PC-3 (cell line): ENCODE measurements at regions of chr9 and their contacts with region 1.

Region 1: GRCh38 chr9:108156270-108156998 is 666.9 kb upstream of the KLF4 start:
- DNase-seq: peak; percentile 76
- ATAC-seq: peak; percentile 93
- H3K4me3 ChIP-seq: peak overlapping the region; percentile 47
- H3K27ac ChIP-seq: peak overlapping the region; percentile 62
- H3K4me1 ChIP-seq: peaks cover 15% of the 10 kb centered on the region
- H3K27me3 ChIP-seq: no peaks in the 10 kb centered on the region
- CTCF ChIP-seq: no peak

Region 2: DNA sequence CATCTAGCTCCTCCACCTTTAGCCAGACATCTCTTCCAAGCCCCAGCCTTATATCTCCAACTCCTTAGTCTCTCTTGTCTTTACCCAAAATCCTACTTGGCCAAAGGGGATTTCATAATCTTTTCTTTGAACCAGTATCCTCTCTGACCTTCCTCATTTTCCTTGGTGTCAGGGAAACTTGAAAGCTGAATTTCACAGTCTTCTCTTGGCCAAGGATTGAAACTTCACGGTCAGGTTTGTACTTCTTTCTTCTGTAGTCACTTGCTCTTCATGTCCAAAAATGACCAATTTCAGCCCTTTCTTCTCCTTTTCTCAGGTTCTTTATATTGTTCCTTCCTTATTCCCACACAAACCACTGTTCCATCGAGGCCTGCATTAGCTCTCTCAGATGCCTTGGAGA is 193.2 kb before region 1 on chr9:
- CTCF ChIA-PET with region 1: no interaction called
- POLR2A ChIA-PET with region 1: no interaction called
- intact Hi-C with region 1: loop called (anchors 1 kb)
- DNase-seq: no peak
- ATAC-seq: no peak
- H3K4me3 ChIP-seq: no peak overlapping the region
- H3K27ac ChIP-seq: no peak overlapping the region
- H3K4me1 ChIP-seq: no peaks in the 10 kb centered on the region
- H3K27me3 ChIP-seq: no peaks in the 10 kb centered on the region
- CTCF ChIP-seq: no peak

Region 3: GRCh38 chr9:108681851-108682600 is 525.6 kb after region 1 on chr9:
- CTCF ChIA-PET with region 1: no interaction called
- POLR2A ChIA-PET with region 1: no interaction called
- intact Hi-C with region 1: no loop called
- DNase-seq: no peak
- ATAC-seq: no peak
- H3K4me3 ChIP-seq: no peak overlapping the region
- H3K27ac ChIP-seq: no peak overlapping the region
- H3K4me1 ChIP-seq: no peaks in the 10 kb centered on the region
- H3K27me3 ChIP-seq: no peaks in the 10 kb centered on the region
- CTCF ChIP-seq: no peak